ENCODE measurements at regions of chr7 and their contacts with region 1.

Region 1: DNA sequence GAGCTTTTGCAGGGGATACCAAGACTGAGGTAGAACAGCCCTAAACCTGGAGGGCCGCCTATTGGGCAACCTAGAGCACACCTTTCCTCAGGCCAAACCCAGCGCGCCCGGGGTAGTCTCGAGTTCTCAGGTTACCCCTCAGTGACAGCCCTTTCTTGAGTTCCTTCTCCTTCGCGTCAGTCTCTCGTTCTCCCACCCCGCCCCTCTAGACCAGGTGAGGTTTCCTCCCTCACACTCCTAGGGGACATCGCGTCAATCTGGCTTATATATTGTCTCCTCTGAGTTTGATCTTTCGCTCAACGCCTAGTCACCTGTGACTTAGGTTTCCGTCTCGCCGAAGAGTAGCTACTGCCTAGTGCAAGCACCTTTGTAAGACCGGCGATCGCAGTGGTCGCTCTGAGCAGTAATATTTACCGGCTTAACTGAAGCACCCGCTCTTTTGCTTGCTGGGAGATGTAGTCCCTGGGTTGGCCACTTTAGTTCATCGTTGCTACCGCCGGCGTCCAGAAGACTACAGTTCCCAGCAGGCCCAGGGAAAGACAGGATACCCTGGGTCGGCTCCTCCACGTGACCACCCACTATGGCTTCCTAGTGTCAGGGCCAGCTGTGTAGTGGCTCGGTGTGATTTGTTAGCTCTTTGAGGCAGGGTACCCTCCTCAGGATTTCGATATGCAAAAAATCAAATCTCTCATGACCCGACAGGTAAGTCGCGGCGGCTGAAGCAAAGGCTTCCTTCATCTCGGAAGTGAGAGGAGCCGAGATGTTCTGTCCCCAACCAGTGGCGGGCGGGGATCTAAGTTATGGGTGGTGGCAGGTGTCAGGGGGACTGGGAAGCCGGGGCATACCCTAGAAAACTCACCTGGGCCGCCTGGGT is at the start of gene VPS50:
- DNase-seq: peak; percentile 95
- H3K4me3 Mint-ChIP-seq: peak within 1 kb of the TSS; percentile 91
- H3K27ac Mint-ChIP-seq: peak within 1 kb of the TSS; percentile 90
- H3K4me1 Mint-ChIP-seq: peaks cover 11% of the 10 kb centered on the region
- H3K27me3 Mint-ChIP-seq: no peaks in the 10 kb centered on the region
- total RNA-seq, gene VPS50: 15.2 to 18.0 TPM

Region 2: GRCh38 chr7:92447345-92448204 is 784.5 kb before region 1 on chr7 and contains the start of gene GATAD1:
- CTCF ChIA-PET with region 1: no interaction called
- POLR2A ChIA-PET with region 1: no interaction called
- intact Hi-C with region 1: loop called (anchors 5 kb)
- DNase-seq: peak; percentile 88
- H3K4me3 Mint-ChIP-seq: peak within 1 kb of the TSS; percentile 82
- H3K27ac Mint-ChIP-seq: peak within 1 kb of the TSS; percentile 81
- H3K4me1 Mint-ChIP-seq: peaks cover 16% of the 10 kb centered on the region
- H3K27me3 Mint-ChIP-seq: no peaks in the 10 kb centered on the region
- total RNA-seq, gene GATAD1: 19.4 to 21.2 TPM

Region 3: GRCh38 chr7:92621026-92621540 is 611.0 kb before region 1 on chr7:
- CTCF ChIA-PET with region 1: no interaction called
- POLR2A ChIA-PET with region 1: no interaction called
- intact Hi-C with region 1: loop called (anchors 1 kb)
- DNase-seq: peak; percentile 86
- H3K4me3 Mint-ChIP-seq: peak overlapping the region; percentile 49
- H3K27ac Mint-ChIP-seq: peak overlapping the region; percentile 93
- H3K4me1 Mint-ChIP-seq: peaks cover 53% of the 10 kb centered on the region
- H3K27me3 Mint-ChIP-seq: no peaks in the 10 kb centered on the region

Region 4: GRCh38 chr7:93092757-93093370 is 139.2 kb before region 1 on chr7:
- CTCF ChIA-PET with region 1: interaction called, 19 read pairs
- POLR2A ChIA-PET with region 1: no interaction called
- intact Hi-C with region 1: loop called (anchors 1 kb)
- DNase-seq: no peak
- H3K4me3 Mint-ChIP-seq: no peak overlapping the region
- H3K27ac Mint-ChIP-seq: no peak overlapping the region
- H3K4me1 Mint-ChIP-seq: peaks cover 2% of the 10 kb centered on the region
- H3K27me3 Mint-ChIP-seq: peaks cover 11% of the 10 kb centered on the region

Region 5: DNA sequence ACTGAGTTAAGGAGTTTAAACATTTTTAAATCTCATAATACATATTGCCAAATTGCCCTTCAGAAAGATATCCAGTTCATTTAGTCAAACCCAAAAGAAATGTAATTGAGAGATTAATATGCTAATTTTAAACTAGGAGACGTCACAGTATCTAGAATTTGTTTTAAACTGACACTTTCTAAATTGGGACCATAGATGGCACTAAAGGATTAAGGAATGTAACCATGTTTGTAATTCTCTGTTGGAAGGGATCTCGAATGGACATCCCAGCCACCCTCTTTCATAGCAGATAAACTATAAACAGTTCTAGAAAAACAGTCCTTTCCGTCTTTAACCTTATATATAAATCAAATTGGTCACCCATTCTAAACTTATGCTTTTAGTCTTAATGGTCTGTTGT is 53.8 kb before region 1 on chr7:
- CTCF ChIA-PET with region 1: interaction called, 6 read pairs
- POLR2A ChIA-PET with region 1: no interaction called
- intact Hi-C with region 1: loop called (anchors 1 kb)
- DNase-seq: no peak
- H3K4me3 Mint-ChIP-seq: no peak overlapping the region
- H3K27ac Mint-ChIP-seq: no peak overlapping the region
- H3K4me1 Mint-ChIP-seq: no peaks in the 10 kb centered on the region
- H3K27me3 Mint-ChIP-seq: peaks cover 22% of the 10 kb centered on the region

Region 6: GRCh38 chr7:93279541-93279940 is 47.5 kb after region 1 on chr7:
- CTCF ChIA-PET with region 1: no interaction called
- POLR2A ChIA-PET with region 1: no interaction called
- intact Hi-C with region 1: no loop called
- DNase-seq: no peak
- H3K4me3 Mint-ChIP-seq: no peak overlapping the region
- H3K27ac Mint-ChIP-seq: no peak overlapping the region
- H3K4me1 Mint-ChIP-seq: no peaks in the 10 kb centered on the region
- H3K27me3 Mint-ChIP-seq: no peaks in the 10 kb centered on the region

Region 7: DNA sequence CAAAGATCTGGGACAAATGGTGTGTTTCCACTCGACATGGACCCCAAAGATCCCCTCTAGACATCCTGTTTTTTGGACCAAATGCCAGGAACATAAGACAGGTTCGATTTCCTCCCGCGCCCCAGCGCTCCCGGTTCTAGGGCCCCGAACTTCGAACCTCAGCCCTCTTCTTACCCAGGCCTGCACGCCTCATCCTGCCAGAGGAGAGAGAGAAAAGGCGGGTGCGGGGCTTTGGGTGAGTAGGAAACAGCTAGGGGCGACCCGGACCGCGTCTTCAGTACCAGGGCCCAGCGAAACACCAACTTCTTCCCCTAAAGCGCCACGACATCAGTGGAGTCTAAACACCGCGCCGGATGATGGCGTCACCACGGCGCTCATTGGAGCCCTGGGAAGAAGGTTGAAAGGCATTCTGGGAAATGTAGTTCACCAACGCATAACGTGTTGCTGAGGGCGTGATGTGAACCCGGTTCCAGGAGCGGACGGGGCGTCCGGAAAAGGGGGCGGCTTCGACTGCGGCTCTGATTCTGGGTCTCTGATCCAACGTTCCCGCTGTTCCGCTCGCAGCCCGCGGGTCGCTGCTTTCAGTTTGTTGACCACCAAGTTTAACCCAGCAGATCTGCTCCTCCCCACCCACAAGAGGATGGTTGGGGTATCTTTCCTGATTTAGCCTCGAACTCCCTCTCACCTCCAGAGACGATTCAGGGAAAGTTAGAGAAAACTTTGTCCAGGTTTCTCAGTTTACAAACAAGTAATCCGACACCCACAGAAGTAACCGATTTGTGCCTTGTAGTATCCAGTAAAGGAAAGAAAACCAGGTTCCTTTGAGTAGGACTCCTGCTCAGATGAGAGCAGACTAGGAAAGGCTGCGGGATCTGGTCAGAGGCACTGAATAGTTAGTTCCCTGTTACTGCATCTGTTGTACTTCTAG is 772.3 kb after region 1 on chr7 and contains the start of gene BET1:
- CTCF ChIA-PET with region 1: no interaction called
- POLR2A ChIA-PET with region 1: no interaction called
- intact Hi-C with region 1: loop called (anchors 1 kb)
- DNase-seq: peak; percentile 94
- H3K4me3 Mint-ChIP-seq: peak within 1 kb of the TSS; percentile 95
- H3K27ac Mint-ChIP-seq: peak within 1 kb of the TSS; percentile 92
- H3K4me1 Mint-ChIP-seq: peaks cover 37% of the 10 kb centered on the region
- H3K27me3 Mint-ChIP-seq: peaks cover 8% of the 10 kb centered on the region
- total RNA-seq, gene BET1: 19.3 to 20.5 TPM

Region 8: DNA sequence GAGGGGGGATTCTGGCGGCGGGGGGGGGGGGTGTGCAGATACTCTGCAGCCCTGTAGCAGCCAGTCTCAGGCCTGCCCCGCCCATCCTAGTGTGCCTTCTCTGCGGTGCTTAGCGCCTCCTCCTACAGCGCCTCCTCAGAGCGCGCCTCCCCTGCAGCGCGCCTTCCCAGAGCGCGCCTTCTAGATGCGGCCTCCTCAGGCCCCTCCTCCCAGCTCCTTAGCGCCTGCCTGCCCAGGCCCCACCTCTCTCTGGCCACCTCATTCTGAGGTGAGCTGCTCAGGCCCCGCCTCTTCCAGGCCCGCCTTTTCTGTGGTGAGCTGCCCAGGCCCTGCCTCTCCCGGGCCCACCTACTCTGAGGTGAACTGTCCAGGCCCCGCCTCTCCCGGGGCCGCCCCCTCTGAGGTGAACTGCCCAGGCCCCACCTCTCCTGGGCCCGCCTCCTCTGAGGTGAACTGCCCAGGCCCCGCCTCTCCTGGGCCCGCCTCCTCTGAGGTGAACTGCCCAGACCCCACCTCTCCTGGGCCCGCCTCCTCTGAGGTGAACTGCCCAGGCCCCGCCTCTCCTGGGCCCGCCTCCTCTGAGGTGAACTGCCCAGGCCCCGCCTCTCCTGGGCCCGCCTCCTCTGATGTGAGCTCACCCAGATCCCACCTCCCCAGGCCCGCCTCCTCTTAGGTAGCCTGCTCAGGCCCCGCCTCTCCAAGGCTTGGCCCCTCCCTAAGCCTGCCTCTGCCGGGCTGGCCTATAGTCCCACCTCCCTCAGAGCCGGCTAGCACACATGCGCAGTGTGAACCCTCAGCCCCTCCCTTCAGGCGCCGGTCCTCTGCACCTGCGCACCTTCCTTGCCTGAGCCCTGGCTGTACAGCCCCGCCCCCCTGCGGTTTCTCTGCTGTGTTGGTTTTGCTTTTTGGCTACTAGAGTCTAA is 1426.0 kb after region 1 on chr7:
- CTCF ChIA-PET with region 1: no interaction called
- POLR2A ChIA-PET with region 1: no interaction called
- intact Hi-C with region 1: loop called (anchors 2 kb)
- DNase-seq: peak; percentile 95
- H3K4me3 Mint-ChIP-seq: peak overlapping the region; percentile 85
- H3K27ac Mint-ChIP-seq: no peak overlapping the region
- H3K4me1 Mint-ChIP-seq: peaks cover 12% of the 10 kb centered on the region
- H3K27me3 Mint-ChIP-seq: peaks cover 16% of the 10 kb centered on the region